Activated naive CD4-positive, alpha-beta T cell treated with anti-CD3 and anti-CD28 coated beads for 36 hours (primary cell): ENCODE measurements at regions of chr2 and their contacts with region 1.

Region 1: DNA sequence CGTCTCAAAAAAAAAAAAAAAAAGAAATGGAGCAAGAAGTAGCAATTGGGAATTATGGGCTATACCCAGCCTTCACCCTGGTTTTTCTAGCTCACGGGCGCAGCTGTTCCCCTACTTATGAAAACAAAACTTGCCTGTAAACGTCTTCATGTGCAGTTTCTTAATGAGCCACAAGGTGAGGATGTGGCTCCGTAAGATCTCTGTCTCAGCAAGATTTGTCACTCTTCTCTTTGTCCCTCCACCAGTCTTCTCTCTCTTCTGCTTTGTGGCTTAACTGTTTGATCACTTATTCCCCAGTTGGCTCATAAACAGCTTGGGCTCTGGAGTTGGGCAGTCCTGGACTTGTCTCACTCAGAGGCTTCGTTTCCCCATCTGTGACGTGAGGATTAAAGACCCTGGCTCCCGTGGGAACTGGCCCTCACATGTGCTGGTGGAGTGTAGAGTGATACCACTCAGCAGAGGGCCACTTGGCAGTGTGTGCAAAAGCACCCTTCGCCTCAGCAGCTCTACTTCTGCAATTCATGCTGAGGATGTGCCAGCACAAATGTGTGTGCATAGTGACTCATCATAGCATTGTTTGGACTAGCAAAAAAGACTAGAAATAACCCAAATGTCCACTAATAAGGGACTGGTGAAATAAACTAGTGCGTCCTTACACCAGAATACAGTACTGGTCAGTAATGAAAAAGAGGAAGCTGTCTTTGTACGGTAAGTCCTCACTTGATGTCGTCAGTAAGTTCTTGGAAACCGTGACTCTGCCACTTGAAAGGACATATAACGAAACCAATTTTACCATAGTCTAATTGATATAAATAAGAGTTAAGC is 8.7 kb downstream of the CEP68 start:
- DNase-seq: peak; percentile 70
- H3K4me3 Mint-ChIP-seq: no peak overlapping the region
- H3K27ac Mint-ChIP-seq: peak overlapping the region; percentile 47
- H3K4me1 Mint-ChIP-seq: peaks cover 32% of the 10 kb centered on the region
- H3K27me3 Mint-ChIP-seq: no peaks in the 10 kb centered on the region

Region 2: DNA sequence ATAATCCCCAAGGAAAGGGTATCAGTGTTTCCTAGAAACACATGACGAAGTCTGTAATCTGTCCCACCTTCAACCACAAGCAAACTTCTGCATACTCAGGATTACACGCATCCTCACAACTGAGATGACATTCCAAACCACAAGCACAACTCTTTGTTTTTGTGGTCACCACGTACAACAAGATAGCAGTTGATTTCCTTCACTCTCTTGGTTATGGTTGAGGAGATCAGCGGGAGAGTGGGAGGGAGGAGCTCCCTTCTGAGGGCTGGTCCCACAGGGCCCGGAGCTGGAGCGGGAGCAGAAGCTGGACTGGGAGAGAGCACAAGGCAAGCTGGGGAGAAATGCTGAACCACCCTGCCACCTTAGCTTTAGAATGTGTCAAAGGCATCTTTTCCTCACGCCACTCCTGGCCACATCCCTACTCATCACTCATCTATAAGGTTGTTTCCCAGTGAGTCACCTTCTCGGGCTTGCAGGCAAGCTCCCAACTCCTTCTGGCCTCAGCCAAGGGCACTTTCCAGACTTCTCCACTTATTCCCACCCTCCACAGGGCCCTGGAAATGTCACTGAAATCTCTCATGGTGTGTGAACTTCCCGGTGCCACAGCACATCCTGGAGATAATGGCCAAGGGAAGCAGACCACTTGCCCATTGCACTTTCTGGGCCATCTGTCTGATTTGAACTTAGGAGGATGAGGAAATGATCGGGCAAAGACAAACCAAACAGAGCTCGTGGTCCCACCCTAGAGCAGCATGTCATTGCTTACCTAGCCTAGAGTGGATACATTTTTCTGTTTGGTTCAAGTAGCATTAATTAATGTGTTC is 709.9 kb before region 1 on chr2:
- CTCF ChIA-PET with region 1: no interaction called
- intact Hi-C with region 1: no loop called
- DNase-seq: no peak
- H3K4me3 Mint-ChIP-seq: no peak overlapping the region
- H3K27ac Mint-ChIP-seq: no peak overlapping the region
- H3K4me1 Mint-ChIP-seq: peaks cover 5% of the 10 kb centered on the region
- H3K27me3 Mint-ChIP-seq: peaks cover 10% of the 10 kb centered on the region

Region 3: DNA sequence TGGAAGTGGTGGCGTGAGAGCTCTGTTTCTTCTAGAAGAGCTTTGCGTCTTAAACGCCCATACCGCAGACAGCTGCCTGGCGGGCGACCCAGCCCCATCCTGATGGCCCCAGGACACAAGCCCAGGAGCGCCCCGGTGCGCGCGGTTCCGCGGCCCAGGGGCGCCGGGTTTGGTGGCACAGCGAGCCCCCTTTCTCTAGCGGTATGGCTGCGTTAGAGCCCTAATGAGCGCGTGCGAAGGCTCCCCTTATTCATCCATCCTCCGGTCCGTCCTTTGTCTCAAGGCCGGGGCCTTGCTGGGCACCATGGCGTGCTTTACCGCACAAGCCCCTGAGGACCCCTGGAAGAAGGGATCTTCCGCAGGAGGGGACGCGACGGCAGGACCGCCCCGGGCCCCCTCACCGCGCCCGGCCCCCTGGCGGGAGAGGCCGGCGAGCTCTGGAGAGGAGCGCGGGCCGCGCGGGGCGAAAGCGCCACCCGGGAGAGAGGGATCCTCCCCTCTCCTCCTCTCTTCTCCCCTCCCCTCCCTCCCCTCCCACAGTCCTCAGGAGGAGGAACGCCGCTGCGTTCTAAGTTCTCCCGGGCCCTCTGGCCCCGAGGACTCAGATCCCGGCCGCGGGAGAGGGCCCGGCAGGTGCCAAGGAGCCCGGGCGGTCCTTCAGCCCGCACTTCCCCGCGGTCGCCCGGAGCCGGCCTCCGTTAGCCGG is 76.4 kb before region 1 on chr2:
- CTCF ChIA-PET with region 1: no interaction called
- intact Hi-C with region 1: no loop called
- DNase-seq: peak; percentile 35
- H3K4me3 Mint-ChIP-seq: peak overlapping the region; percentile 60
- H3K27ac Mint-ChIP-seq: peak overlapping the region; percentile 7
- H3K4me1 Mint-ChIP-seq: peaks cover 35% of the 10 kb centered on the region
- H3K27me3 Mint-ChIP-seq: peaks cover 11% of the 10 kb centered on the region

Region 4: GRCh38 chr2:65092791-65093190 is 27.9 kb after region 1 on chr2:
- CTCF ChIA-PET with region 1: interaction called, 15 read pairs
- intact Hi-C with region 1: no loop called
- DNase-seq: no peak
- H3K4me3 Mint-ChIP-seq: no peak overlapping the region
- H3K27ac Mint-ChIP-seq: peak overlapping the region; percentile 57
- H3K4me1 Mint-ChIP-seq: peaks cover 7% of the 10 kb centered on the region
- H3K27me3 Mint-ChIP-seq: no peaks in the 10 kb centered on the region

Region 5: DNA sequence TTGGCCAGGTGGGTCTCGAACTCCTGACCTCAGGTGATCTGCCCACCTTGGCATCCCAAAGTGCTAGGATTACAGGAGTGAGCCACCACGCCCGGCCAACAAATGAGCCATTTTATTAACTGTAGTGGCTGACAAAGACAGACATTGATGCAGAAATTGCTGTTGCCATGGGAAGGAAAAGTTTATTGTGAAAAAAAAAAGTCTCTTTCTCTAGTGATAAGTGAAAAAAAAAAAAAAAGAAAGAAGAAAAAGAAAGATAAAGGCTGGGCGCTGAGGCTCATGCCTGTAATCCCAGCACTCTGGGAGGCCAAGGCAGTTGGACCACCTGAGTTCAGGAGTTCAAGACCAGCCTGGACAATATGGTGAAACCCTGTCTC is 104.8 kb after region 1 on chr2:
- CTCF ChIA-PET with region 1: interaction called, 63 read pairs
- intact Hi-C with region 1: loop called (anchors 1 kb)
- DNase-seq: no peak
- H3K4me3 Mint-ChIP-seq: no peak overlapping the region
- H3K27ac Mint-ChIP-seq: no peak overlapping the region
- H3K4me1 Mint-ChIP-seq: no peaks in the 10 kb centered on the region
- H3K27me3 Mint-ChIP-seq: no peaks in the 10 kb centered on the region

Region 6: DNA sequence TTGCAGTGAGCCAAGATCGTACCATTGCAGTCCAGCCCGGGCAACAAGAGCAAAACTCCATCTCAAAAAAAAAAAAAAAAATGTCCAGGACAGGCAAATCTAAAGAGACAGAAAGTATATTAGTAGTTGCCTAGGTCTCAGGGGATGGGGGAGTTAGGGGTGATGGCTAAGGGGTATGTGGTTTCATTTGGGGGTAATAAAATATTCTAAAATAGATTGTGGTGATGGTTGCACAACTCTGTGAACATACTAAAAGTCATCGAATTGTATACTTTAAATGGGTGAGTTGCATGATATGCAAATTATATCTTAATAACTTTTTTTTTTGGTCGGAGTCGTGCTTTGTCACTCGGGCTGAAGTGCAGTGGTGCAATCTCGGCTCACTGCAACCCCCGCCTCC is 128.5 kb after region 1 on chr2:
- CTCF ChIA-PET with region 1: interaction called, 44 read pairs
- intact Hi-C with region 1: no loop called
- DNase-seq: no peak
- H3K4me3 Mint-ChIP-seq: no peak overlapping the region
- H3K27ac Mint-ChIP-seq: no peak overlapping the region
- H3K4me1 Mint-ChIP-seq: no peaks in the 10 kb centered on the region
- H3K27me3 Mint-ChIP-seq: peaks cover 5% of the 10 kb centered on the region

Region 7: GRCh38 chr2:65554765-65555591 is 490.0 kb after region 1 on chr2:
- CTCF ChIA-PET with region 1: no interaction called
- intact Hi-C with region 1: loop called (anchors 1 kb)
- DNase-seq: no peak
- H3K4me3 Mint-ChIP-seq: no peak overlapping the region
- H3K27ac Mint-ChIP-seq: no peak overlapping the region
- H3K4me1 Mint-ChIP-seq: peaks cover 3% of the 10 kb centered on the region
- H3K27me3 Mint-ChIP-seq: no peaks in the 10 kb centered on the region